WTC11 (cell line): ENCODE measurements at regions of chr1 and their contacts with region 1.

Region 1: GRCh38 chr1:59672851-59673572 is 141.7 kb upstream of the HOOK1 start:
- DNase-seq: no peak
- ATAC-seq: peak; percentile 12
- H3K4me3 Mint-ChIP-seq: no peak overlapping the region
- H3K27ac Mint-ChIP-seq: peak overlapping the region; percentile 36; the same call in 1 of the 2 replicates
- H3K4me1 Mint-ChIP-seq: peaks cover 66% of the 10 kb centered on the region
- H3K27me3 Mint-ChIP-seq: no peaks in the 10 kb centered on the region
- CTCF ChIP-seq: no peak

Region 2: GRCh38 chr1:59384443-59384842 is 288.6 kb before region 1 on chr1:
- CTCF ChIA-PET with region 1: no interaction called
- POLR2A ChIA-PET with region 1: interaction called, 11 read pairs
- DNase-seq: no peak
- ATAC-seq: no peak
- H3K4me3 Mint-ChIP-seq: peak overlapping the region; percentile 5; the same call in 1 of the 2 replicates
- H3K27ac Mint-ChIP-seq: peak overlapping the region; percentile 77
- H3K4me1 Mint-ChIP-seq: peaks cover 32% of the 10 kb centered on the region
- H3K27me3 Mint-ChIP-seq: no peaks in the 10 kb centered on the region; the same call in 1 of the 2 replicates
- CTCF ChIP-seq: no peak

Region 3: GRCh38 chr1:59520827-59521418 is 152.1 kb before region 1 on chr1:
- CTCF ChIA-PET with region 1: no interaction called
- POLR2A ChIA-PET with region 1: no interaction called
- DNase-seq: no peak
- ATAC-seq: no peak
- H3K4me3 Mint-ChIP-seq: no peak overlapping the region
- H3K27ac Mint-ChIP-seq: no peak overlapping the region
- H3K4me1 Mint-ChIP-seq: peaks cover 4% of the 10 kb centered on the region; the same call in 1 of the 2 replicates
- H3K27me3 Mint-ChIP-seq: no peaks in the 10 kb centered on the region
- CTCF ChIP-seq: no peak

Region 4: DNA sequence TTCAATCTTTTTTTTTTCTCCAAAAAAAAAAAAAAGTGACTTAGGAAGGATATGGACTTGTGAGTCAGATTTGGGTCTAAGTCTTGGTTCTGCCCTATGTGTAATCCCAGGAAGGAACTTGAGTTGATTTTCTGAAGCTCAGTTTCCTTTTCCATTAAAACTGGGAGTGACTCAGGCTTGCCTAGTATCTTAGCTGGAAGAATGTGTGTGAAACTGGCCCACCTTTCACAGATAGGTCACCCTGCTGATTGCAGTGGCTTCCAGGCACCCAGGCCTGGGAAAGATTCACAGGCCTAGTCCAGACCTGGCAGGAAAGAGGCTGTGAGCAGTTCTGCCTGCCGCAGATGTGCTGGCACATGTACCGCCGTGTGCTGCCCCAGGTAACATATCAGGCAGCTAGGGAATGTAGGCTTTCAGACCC is 76.6 kb before region 1 on chr1:
- CTCF ChIA-PET with region 1: no interaction called
- POLR2A ChIA-PET with region 1: no interaction called
- DNase-seq: no peak
- ATAC-seq: no peak
- H3K4me3 Mint-ChIP-seq: no peak overlapping the region
- H3K27ac Mint-ChIP-seq: no peak overlapping the region
- H3K4me1 Mint-ChIP-seq: peaks cover 13% of the 10 kb centered on the region
- H3K27me3 Mint-ChIP-seq: no peaks in the 10 kb centered on the region
- CTCF ChIP-seq: no peak